PC-9 (cell line): ENCODE measurements at regions of chr12 and their contacts with region 1.

Region 1: GRCh38 chr12:88207921-88208620 is 66.0 kb downstream of the TMTC3 start:
- DNase-seq: no peak
- H3K4me3 ChIP-seq: no peak overlapping the region
- H3K27ac ChIP-seq: no peak overlapping the region
- H3K4me1 ChIP-seq: no peaks in the 10 kb centered on the region
- H3K27me3 ChIP-seq: no peaks in the 10 kb centered on the region
- CTCF ChIP-seq: no peak

Region 2: GRCh38 chr12:88122666-88123065 is 85.4 kb before region 1 on chr12:
- CTCF ChIA-PET with region 1: no interaction called
- POLR2A ChIA-PET with region 1: no interaction called
- intact Hi-C with region 1: no loop called
- DNase-seq: no peak
- H3K4me3 ChIP-seq: no peak overlapping the region
- H3K27ac ChIP-seq: no peak overlapping the region
- H3K4me1 ChIP-seq: no peaks in the 10 kb centered on the region
- H3K27me3 ChIP-seq: no peaks in the 10 kb centered on the region
- CTCF ChIP-seq: no peak

Region 3: GRCh38 chr12:88166179-88166578 is 41.9 kb before region 1 on chr12:
- CTCF ChIA-PET with region 1: no interaction called
- POLR2A ChIA-PET with region 1: interaction called, 30 read pairs
- intact Hi-C with region 1: no loop called
- DNase-seq: no peak
- H3K4me3 ChIP-seq: no peak overlapping the region
- H3K27ac ChIP-seq: no peak overlapping the region
- H3K4me1 ChIP-seq: no peaks in the 10 kb centered on the region
- H3K27me3 ChIP-seq: no peaks in the 10 kb centered on the region
- CTCF ChIP-seq: no peak

Region 4: DNA sequence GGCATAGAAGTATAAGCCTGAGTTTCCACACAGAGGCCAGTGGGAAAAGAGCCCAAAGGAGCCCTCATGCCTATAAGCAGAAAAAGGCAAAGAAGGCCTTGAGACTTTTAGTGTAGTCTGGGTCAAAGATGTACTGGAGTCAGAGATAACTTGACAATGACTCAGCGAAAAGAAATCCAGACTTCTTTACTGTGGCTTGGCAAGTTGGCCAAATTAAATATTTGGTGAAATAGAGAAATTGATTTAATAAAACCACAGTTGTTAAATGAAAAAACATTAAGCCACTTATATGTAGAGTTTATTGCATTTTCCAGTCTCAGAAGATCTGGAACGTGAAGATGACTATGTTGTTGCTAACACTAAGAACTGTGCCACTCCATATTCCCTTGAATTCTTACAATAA is 39.2 kb after region 1 on chr12:
- CTCF ChIA-PET with region 1: no interaction called
- POLR2A ChIA-PET with region 1: no interaction called
- intact Hi-C with region 1: no loop called
- DNase-seq: peak in 1 of 2 experiments; percentile 46
- H3K4me3 ChIP-seq: no peak overlapping the region
- H3K27ac ChIP-seq: no peak overlapping the region
- H3K4me1 ChIP-seq: peaks cover 8% of the 10 kb centered on the region
- H3K27me3 ChIP-seq: no peaks in the 10 kb centered on the region
- CTCF ChIP-seq: no peak